Heart left ventricle (tissue), 16 donors: ENCODE measurements at regions of chr5 and their contacts with region 1.

Region 1: DNA sequence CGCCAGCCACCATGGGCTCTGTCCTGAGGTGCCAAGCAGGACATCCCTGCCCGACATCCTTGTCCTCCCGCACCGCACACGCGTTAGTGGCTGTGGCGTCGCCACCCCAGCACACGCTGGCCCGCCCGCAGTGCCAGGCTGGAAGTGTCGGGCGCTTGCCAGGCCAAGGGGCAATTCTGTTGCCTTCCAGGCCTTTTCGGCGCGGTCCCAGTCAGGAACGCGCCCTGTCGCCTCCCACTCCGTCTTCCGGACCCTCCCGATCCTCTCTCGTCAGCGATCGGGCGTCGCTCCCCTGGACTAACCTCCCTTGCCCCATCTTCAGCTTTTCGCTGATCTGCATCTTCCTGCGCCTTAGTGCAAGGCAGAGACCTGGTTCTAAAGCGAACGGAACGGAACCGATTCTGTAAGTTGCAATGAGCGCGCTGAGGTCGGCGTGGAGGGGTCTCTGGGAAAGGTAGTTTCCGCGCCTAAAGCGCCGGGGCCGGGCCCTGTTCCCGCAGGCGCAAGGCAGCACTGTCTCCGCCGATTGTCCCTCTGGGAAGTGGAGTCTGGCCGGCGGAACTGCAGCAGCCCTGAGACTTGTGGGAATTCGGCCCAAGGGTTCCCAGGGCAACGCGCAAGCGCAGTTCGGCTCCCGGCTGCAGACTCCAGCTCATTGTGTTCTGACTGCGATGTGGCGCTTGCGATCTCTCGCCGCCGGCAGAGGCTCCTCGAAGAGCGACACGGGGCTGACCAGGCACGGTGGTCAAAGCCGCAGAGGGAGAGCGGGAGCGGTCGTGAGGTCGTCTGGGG is at the start of gene ZNF454:
- DNase-seq: peak; percentile 95 to 97 (median 96)
- ATAC-seq: peak; percentile 99 to 100 (median 100)
- H3K4me3 ChIP-seq: peak within 1 kb of the TSS; percentile 54 to 97 (median 71)
- H3K27ac ChIP-seq: peak within 1 kb of the TSS; percentile 2 to 88 (median 71)
- H3K4me1 ChIP-seq: peaks cover 0 to 16% (median 6%) of the 10 kb centered on the region in 12 donors
- H3K27me3 ChIP-seq: no peaks in the 10 kb centered on the region
- CTCF ChIP-seq: peak in 1 of 12 donors; percentile 10
- POLR2A ChIP-seq: peak in 1 of 2 donors; percentile 54
- total RNA-seq, gene ZNF454: 1.3 to 3.4 (median 1.8) TPM

Region 2: GRCh38 chr5:178564397-178564796 is 376.4 kb before region 1 on chr5:
- intact Hi-C with region 1: no loop called
- DNase-seq: no peak
- ATAC-seq: no peak
- H3K4me3 ChIP-seq: no peak overlapping the region
- H3K27ac ChIP-seq: no peak overlapping the region
- H3K4me1 ChIP-seq: no peaks in the 10 kb centered on the region
- H3K27me3 ChIP-seq: peaks cover 0 to 5% (median 0%) of the 10 kb centered on the region in 9 donors
- CTCF ChIP-seq: no peak
- POLR2A ChIP-seq: no peak

Region 3: DNA sequence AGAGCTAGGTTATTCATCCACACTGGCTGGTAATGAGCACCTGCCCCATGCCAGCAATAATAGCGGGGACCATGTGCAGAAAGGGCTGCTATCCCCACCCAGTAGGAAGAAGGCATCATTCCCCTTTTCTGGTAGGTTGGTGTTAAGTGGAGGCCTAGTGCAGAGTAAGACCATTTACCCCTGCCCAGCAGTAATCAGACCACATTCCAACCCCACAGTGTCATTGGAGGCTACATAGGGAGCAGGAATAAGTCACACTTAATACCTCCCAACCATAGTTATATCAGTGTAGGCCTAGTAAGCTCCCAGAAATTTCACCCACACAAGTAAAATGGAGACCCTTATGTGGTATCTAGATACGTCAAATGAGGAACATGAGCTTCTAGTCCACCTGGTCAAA is 50.7 kb before region 1 on chr5:
- intact Hi-C with region 1: loop called in 1 of 10 experiments (anchors 5 kb)
- DNase-seq: no peak
- ATAC-seq: no peak
- H3K4me3 ChIP-seq: no peak overlapping the region
- H3K27ac ChIP-seq: no peak overlapping the region
- H3K4me1 ChIP-seq: no peaks in the 10 kb centered on the region
- H3K27me3 ChIP-seq: no peaks in the 10 kb centered on the region
- CTCF ChIP-seq: no peak
- POLR2A ChIP-seq: no peak

Region 4: DNA sequence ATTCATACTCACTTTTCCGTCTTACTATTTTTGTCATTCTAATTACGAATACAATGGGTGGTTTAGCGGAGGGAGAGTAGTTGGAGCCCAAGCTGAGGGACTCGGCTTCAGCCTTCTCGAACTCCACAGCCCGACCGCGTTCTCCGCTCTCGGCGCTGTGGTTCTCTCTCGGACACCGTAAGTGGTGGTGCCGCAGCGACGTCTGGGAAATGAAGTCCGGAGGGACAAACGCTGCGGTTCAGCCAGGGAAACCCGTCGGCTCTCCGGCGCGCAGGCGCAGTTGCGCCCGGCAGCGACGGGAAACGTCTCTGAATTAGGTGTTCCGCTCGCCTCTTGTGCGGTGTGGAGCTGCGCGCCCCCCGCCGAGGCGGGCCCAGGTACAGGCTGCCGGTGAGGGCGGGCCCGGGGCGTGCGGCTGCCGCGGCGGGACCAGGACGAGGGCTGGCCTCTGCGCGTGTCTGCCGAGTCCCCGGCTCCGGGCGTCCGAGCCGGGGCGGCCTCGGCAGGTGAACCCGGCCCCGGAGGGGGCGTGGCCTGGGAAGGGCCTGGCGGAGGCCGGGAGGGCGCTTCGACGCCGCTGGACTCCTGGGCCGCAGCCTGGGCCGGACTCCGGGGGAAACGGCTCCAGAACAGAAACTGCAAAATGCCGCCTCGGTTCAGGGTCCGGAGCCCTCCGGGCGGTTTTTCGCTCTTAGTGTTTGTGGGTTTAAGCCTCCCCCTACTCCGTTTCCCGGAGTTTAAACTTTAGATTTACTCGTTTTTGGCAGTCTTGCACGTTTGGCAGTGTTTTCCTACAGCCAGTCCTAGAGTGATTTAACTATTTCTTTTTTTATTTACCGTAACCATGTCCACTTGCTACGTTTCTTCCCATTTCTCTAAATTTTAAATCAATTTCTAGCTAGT is 83.0 kb after region 1 on chr5 and contains the start of gene ZNF879:
- intact Hi-C with region 1: loop called in 6 of 10 experiments (anchors 2 to 10 kb)
- DNase-seq: peak; percentile 95 to 97 (median 96)
- ATAC-seq: peak; percentile 95 to 99 (median 99)
- H3K4me3 ChIP-seq: peak within 1 kb of the TSS; percentile 38 to 99 (median 79)
- H3K27ac ChIP-seq: peak within 1 kb of the TSS; percentile 53 to 96 (median 87)
- H3K4me1 ChIP-seq: peaks cover 0 to 18% (median 10%) of the 10 kb centered on the region in 12 donors
- H3K27me3 ChIP-seq: no peaks in the 10 kb centered on the region
- CTCF ChIP-seq: no peak
- POLR2A ChIP-seq: peak in 1 of 2 donors; percentile 59
- total RNA-seq, gene ZNF879: 2.8 to 4.5 (median 3.3) TPM

Region 5: DNA sequence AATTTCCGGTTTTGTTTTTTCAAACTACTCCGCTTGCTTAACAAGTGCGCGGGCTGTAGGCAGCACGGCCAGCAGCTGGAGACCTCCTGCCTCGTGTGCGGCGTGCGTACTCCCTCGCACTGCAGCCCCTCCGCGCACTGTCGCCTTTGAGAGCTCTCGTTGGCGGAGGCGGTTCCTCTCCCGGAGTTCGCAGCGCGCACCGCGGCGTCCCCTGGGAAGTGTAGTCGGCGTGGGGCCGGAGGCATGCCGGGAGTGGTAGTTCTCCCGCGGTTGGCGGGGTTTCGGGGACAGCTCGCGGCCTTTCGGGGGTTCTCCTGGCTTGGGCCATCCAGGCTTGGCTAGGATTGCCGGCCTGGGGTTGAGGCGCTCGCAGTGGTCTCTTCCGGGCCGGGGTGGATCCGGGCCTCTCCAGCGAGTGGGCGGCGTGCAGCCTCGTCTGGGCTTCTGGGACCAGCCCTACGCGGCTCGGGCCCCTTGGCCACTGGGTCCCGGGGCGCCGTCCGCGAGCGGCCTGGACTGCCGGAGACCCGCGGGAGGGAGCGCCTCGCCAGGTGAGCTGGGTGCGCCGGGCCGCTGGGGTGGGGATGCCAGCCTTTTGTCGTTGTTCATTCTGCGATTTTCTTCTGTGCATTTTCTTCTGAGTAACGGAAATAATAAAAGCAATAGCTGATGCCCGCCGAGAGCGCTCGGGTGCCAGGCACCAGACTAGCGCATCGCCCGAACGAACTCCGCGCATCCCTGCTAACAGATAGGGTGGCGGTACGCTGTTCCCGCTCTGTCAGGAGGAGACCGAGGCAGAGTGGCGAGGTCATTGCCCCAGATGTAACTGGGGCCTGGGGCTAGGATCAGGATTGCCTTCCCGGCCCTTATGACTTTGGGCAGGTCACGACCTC is 119.6 kb after region 1 on chr5 and contains the start of gene ZNF354C:
- intact Hi-C with region 1: loop called in 2 of 10 experiments (anchors 2 to 10 kb)
- DNase-seq: peak; percentile 92 to 96 (median 94)
- ATAC-seq: peak; percentile 99
- H3K4me3 ChIP-seq: peak within 1 kb of the TSS; percentile 51 to 95 (median 78)
- H3K27ac ChIP-seq: peak within 1 kb of the TSS in 11 of 12 donors; percentile 45 to 86 (median 82)
- H3K4me1 ChIP-seq: peaks cover 0 to 19% (median 9%) of the 10 kb centered on the region in 12 donors
- H3K27me3 ChIP-seq: no peaks in the 10 kb centered on the region
- CTCF ChIP-seq: peak in 1 of 12 donors; percentile 18
- POLR2A ChIP-seq: peak in 1 of 2 donors; percentile 87
- total RNA-seq, gene ZNF354C: 3.5 to 5.7 (median 4.1) TPM

Region 6: DNA sequence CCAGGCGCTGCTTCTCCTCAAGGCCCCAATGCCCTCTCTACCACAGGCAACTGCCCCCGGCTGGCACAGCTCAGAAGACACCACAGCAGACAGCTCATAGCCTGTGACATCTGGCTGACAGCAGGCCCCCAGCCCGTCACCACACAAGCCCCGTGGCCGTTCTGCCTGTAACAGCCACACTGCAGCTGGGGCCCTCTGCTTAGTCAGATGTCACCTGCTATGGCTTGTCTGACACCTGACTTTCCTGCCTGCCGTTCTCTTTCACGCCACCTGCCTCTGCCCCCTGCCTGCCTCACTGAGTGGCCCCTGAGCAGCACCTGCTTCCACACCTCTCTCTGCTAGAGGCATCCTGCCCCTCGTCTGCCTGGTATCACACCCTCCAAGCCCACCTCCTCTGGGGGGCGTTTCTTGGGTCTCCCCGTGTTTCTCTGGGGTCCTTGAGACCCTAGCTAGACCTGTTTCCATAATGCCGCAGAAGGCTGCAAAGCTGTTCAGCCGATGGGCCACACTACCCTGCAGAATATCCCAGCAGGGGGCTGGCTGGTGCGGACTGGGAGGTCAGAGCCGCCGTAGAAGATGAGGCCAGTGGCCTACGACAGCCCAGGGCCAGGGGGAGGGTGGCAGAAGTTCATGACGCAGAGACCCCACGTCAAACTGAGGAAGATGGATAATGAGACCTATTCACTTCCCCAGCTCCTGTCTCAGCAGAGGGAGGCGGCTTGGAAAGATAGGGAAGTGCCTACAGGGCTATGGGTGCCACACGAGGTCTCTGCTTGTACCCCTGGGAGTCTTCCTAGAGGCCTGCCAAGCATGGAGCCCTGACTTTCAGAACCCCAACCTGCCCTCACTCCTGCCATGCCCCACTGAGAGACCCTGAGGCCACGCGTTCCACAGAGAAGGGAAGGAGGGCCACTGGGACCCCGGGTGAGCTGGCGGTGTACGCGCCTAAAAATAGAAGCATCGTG is 214.5 kb after region 1 on chr5:
- intact Hi-C with region 1: no loop called
- DNase-seq: peak in 1 of 5 donors; percentile 42
- ATAC-seq: no peak
- H3K4me3 ChIP-seq: no peak overlapping the region
- H3K27ac ChIP-seq: no peak overlapping the region
- H3K4me1 ChIP-seq: no peaks in the 10 kb centered on the region
- H3K27me3 ChIP-seq: no peaks in the 10 kb centered on the region
- CTCF ChIP-seq: no peak
- POLR2A ChIP-seq: no peak